GM10248 (cell line): ENCODE measurements at regions of chr11 and their contacts with region 1.

Region 1: DNA sequence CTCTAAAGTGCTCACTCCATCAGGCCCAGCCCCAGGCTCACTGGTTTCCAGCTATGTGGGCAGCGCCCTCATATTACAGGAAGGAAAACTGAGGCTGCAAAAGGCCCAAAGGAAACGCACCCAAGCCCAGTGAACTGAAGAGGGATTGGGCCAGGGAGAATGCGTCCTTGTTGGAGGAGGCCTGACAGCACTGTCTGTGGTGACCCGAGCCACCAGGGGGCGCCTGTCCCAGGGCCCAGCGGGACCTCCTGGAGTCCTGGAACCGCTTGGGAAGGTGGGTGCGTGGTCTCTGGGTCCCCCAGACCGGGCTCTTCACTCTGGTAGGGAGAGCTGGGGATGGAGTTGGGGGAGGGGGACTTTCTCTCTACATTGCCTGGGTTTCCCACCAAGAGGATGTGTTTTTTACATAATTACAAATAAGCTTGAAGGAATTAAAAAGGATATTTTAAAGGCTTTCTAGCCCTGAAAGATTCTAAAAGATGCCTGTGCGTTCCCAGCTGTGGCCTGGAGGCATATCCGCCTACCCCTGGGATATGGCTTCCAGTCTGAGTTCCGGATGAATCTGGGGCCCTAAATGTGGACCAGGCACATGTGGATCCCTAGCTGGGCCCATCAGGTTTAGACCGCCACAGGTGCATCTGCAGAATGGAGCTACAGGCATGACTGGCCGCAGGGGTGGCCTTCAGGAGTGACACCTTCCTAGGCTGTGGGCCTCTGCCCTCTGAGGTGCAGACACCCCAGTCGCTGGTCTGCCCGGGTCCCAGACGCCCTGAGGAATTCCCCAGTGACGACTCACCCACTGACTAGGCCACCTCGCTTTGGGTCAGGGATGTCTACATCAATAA is 4.2 kb downstream of the SPI1 start:
- DNase-seq: peak; percentile 84
- CTCF ChIP-seq: peak; percentile 98

Region 2: GRCh38 chr11:46889689-46890475 is 484.2 kb before region 1 on chr11:
- CTCF ChIA-PET with region 1: no interaction called
- POLR2A ChIA-PET with region 1: no interaction called
- DNase-seq: peak; percentile 83
- CTCF ChIP-seq: peak; percentile 78

Region 3: DNA sequence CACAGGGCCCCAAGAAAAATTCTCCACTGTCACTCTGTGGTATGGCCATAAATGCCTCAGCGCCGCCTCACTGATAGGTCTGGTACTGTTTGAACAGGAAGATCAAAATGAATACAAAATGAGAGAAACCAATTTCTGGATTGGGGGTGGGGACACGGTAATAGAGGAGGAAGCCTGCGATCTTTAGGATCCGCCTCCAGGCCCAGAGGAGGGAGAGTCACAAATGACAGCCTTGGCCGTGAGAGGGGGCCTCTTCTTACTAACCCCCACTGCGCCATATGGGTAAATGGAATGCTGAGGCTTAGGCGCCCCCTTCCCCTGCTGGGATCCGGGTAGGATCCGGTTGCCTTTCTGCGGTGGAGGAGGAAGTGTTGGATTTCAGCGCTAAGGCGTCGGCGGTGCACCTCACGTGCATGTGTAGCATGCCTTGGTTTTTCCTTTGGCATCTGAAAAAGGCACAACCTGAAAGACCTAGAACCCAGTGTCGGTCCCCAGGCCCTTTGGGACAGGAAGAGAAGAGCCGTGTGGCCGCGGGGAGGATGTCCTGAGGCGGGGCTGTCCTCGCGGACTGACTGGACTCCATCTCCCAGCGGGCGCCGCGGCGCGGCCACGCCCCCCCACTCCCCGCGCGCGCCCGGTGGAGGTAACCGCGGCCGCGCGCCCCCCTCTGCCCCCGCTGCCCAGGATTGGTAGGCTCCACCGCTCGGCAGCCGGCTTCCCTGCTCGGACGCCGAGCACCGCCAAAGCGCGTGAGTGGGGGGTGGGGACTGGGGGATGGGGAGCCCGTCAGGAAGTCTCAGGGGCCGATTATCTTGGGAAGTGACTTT is 104.9 kb before region 1 on chr11:
- CTCF ChIA-PET with region 1: interaction called, 10 read pairs
- POLR2A ChIA-PET with region 1: no interaction called
- DNase-seq: peak; percentile 93
- CTCF ChIP-seq: no peak

Region 4: GRCh38 chr11:47359586-47359985 is 14.5 kb before region 1 on chr11:
- CTCF ChIA-PET with region 1: interaction called, 28 read pairs
- POLR2A ChIA-PET with region 1: no interaction called
- DNase-seq: no peak
- CTCF ChIP-seq: no peak

Region 5: GRCh38 chr11:47394322-47395222 is 20.5 kb after region 1 on chr11:
- CTCF ChIA-PET with region 1: interaction called, 92 read pairs
- POLR2A ChIA-PET with region 1: interaction called, 4 read pairs
- DNase-seq: peak; percentile 87
- CTCF ChIP-seq: no peak

Region 6: DNA sequence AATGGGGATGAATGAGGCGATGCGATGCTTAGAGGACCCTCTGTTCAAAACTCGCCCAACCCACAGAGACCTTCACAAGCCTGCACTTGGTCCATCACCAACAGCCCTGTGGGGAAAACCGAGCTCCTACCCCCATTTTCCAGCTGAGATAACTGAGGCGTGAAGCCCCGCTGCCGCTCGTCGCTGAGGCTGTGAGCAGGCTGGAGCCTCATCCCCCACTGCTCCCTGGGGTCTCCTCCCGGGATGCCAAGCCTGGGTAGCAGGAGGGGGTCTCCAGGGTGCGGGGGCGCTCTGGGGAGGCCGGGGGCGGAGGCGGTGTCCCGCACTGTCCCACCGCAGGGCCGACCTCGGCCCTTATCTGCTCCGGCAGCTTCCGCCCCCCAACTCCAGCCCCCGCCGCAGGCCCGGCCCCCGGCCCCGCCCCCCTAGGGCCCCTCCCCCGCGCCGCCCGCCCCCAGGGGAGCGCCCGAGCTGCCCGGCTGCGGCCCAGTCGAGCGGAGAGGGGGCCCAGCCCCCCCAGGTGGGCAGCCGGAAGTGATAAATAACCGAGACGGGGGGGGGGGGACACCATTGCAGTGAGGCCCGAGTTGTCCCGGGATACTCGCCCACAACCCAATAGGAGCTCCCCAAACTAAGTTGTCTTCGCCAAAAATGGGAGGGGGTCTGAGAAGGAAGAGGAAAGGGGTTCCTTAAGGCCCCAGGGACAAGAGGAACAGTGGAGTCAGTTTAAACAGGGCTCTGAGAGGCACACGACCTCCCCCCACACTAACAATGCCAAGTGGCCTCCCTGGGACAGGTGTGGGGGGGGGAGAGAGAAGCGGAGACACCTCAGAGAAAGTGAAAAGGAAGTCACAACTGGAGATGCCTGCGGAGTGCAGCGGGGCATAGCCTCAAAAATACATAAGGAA is 26.0 kb after region 1 on chr11:
- CTCF ChIA-PET with region 1: interaction called, 92 read pairs
- POLR2A ChIA-PET with region 1: no interaction called
- DNase-seq: peak; percentile 77
- CTCF ChIP-seq: no peak

Region 7: GRCh38 chr11:47407746-47408590 is 33.9 kb after region 1 on chr11 and contains the start of gene SLC39A13:
- CTCF ChIA-PET with region 1: interaction called, 92 read pairs
- POLR2A ChIA-PET with region 1: interaction called, 3 read pairs
- DNase-seq: peak; percentile 97
- CTCF ChIP-seq: peak; percentile 98

Region 8: DNA sequence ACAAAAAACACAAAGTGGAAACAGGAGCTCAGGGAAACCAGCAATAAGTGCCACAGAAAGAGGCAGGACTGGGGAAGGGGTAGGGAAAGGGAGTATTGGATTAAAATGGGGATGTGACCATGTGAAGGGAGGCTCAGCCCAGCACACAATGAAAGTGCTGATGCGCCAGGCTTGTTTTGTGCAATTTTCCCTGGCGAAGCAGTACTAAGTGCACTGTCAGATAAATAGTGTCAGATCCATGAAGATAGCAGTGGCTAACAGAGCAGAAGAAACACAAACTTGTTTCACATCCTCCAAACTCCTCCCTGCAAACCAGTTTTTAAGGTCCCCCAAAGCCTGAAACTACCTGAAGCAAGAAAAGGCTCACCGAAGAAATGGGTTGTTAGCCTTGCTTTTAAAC is 125.5 kb after region 1 on chr11:
- CTCF ChIA-PET with region 1: no interaction called
- POLR2A ChIA-PET with region 1: no interaction called
- DNase-seq: no peak
- CTCF ChIP-seq: no peak